ENCODE measurements at regions of chr12 and their contacts with region 1.

Region 1: GRCh38 chr12:31117203-31118011 is 43.7 kb downstream of the DDX11 start:
- DNase-seq: peak; percentile 66
- H3K4me3 Mint-ChIP-seq: peak overlapping the region; percentile 64
- H3K27ac Mint-ChIP-seq: no peak overlapping the region
- H3K4me1 Mint-ChIP-seq: peaks cover 15% of the 10 kb centered on the region
- H3K27me3 Mint-ChIP-seq: peaks cover 17% of the 10 kb centered on the region

Region 2: DNA sequence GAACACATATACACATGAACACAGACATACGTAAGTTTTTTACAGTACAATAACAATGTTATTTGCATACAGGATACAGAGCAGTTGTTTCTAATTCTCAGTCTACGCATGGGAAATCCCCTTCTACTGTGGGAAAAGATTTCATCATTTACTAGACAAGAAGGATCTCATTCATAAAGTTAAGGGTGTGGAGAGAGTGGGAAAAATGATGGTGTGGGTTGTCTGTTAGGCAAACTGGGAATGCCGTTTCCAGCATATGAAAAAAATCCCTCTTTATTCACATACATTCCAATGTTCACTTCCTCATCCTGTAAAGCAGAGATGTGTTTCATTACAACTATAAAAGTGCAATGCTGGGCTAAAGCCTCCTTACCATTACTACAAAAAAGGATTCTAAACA is 87.6 kb after region 1 on chr12:
- CTCF ChIA-PET with region 1: no interaction called
- intact Hi-C with region 1: loop called (anchors 1 kb)
- DNase-seq: no peak
- H3K4me3 Mint-ChIP-seq: no peak overlapping the region
- H3K27ac Mint-ChIP-seq: peak overlapping the region; percentile 14
- H3K4me1 Mint-ChIP-seq: peaks cover 23% of the 10 kb centered on the region
- H3K27me3 Mint-ChIP-seq: peaks cover 15% of the 10 kb centered on the region

Region 3: GRCh38 chr12:31238764-31239387 is 121.5 kb after region 1 on chr12:
- CTCF ChIA-PET with region 1: interaction called, 4 read pairs
- intact Hi-C with region 1: loop called (anchors 1 kb)
- DNase-seq: peak; percentile 90
- H3K4me3 Mint-ChIP-seq: no peak overlapping the region
- H3K27ac Mint-ChIP-seq: no peak overlapping the region
- H3K4me1 Mint-ChIP-seq: no peaks in the 10 kb centered on the region
- H3K27me3 Mint-ChIP-seq: peaks cover 21% of the 10 kb centered on the region

Region 4: GRCh38 chr12:31362759-31363415 is 245.5 kb after region 1 on chr12:
- CTCF ChIA-PET with region 1: no interaction called
- intact Hi-C with region 1: loop called (anchors 2 kb)
- DNase-seq: peak; percentile 53
- H3K4me3 Mint-ChIP-seq: peak overlapping the region; percentile 38
- H3K27ac Mint-ChIP-seq: no peak overlapping the region
- H3K4me1 Mint-ChIP-seq: peaks cover 14% of the 10 kb centered on the region
- H3K27me3 Mint-ChIP-seq: no peaks in the 10 kb centered on the region

Measured in activated naive CD4-positive, alpha-beta T cell treated with anti-CD3 and anti-CD28 coated beads for 36 hours (primary cell).